CD8-positive, alpha-beta T cell (primary cell): ENCODE measurements at regions of chr7 and their contacts with region 1.

Region 1: GRCh38 chr7:146698995-146699610 is 582.5 kb downstream of the CNTNAP2 start:
- DNase-seq: no peak
- ATAC-seq: no peak
- H3K4me3 ChIP-seq: no peak overlapping the region
- H3K4me3 Mint-ChIP-seq: no peak overlapping the region
- H3K27ac ChIP-seq: no peak overlapping the region
- H3K27ac Mint-ChIP-seq: no peak overlapping the region
- H3K4me1 ChIP-seq: no peaks in the 10 kb centered on the region
- H3K4me1 Mint-ChIP-seq: no peaks in the 10 kb centered on the region
- H3K27me3 ChIP-seq: no peaks in the 10 kb centered on the region
- H3K27me3 Mint-ChIP-seq: no peaks in the 10 kb centered on the region
- CTCF ChIP-seq: no peak

Region 2: GRCh38 chr7:147188467-147188866 is 489.4 kb after region 1 on chr7:
- CTCF ChIA-PET with region 1: no interaction called
- POLR2A ChIA-PET with region 1: no interaction called
- intact Hi-C with region 1: loop called in 1 of 2 experiments (anchors 5 kb)
- DNase-seq: no peak
- ATAC-seq: no peak
- H3K4me3 ChIP-seq: no peak overlapping the region
- H3K4me3 Mint-ChIP-seq: no peak overlapping the region
- H3K27ac ChIP-seq: no peak overlapping the region
- H3K27ac Mint-ChIP-seq: no peak overlapping the region
- H3K4me1 ChIP-seq: no peaks in the 10 kb centered on the region
- H3K4me1 Mint-ChIP-seq: no peaks in the 10 kb centered on the region
- H3K27me3 ChIP-seq: no peaks in the 10 kb centered on the region
- H3K27me3 Mint-ChIP-seq: no peaks in the 10 kb centered on the region
- CTCF ChIP-seq: no peak